ENCODE measurements at regions of chr6 and their contacts with region 1.

Region 1: GRCh38 chr6:13711733-13712598 is at the start of gene RANBP9:
- DNase-seq: peak; percentile 87 to 94
- ATAC-seq: peak; percentile 83 to 94 (median 85)
- H3K4me3 ChIP-seq: peak within 1 kb of the TSS; percentile 80
- H3K4me3 Mint-ChIP-seq: peak within 1 kb of the TSS; percentile 98
- H3K27ac ChIP-seq: peak within 1 kb of the TSS; percentile 91
- H3K27ac Mint-ChIP-seq: peak within 1 kb of the TSS; percentile 87 to 97
- H3K4me1 ChIP-seq: peaks cover 20% of the 10 kb centered on the region
- H3K4me1 Mint-ChIP-seq: peaks cover 46 to 47% of the 10 kb centered on the region in 2 donors
- H3K27me3 ChIP-seq: no peaks in the 10 kb centered on the region
- H3K27me3 Mint-ChIP-seq: no peaks in the 10 kb centered on the region
- CTCF ChIP-seq: no peak
- total RNA-seq, gene RANBP9: 52.2 to 62.5 (median 57.6) TPM

Region 2: GRCh38 chr6:13526727-13527670 is 185.0 kb before region 1 on chr6:
- intact Hi-C with region 1: no loop called
- DNase-seq: peak; percentile 27 to 62
- ATAC-seq: peak; percentile 86 to 91 (median 86)
- H3K4me3 ChIP-seq: no peak overlapping the region
- H3K4me3 Mint-ChIP-seq: peak overlapping the region; percentile 87
- H3K27ac ChIP-seq: peak overlapping the region; percentile 75
- H3K27ac Mint-ChIP-seq: peak overlapping the region; percentile 75 to 83
- H3K4me1 ChIP-seq: peaks cover 19% of the 10 kb centered on the region
- H3K4me1 Mint-ChIP-seq: peaks cover 17 to 24% of the 10 kb centered on the region in 2 donors
- H3K27me3 ChIP-seq: no peaks in the 10 kb centered on the region
- H3K27me3 Mint-ChIP-seq: no peaks in the 10 kb centered on the region
- CTCF ChIP-seq: no peak

Region 3: GRCh38 chr6:13614926-13615798 is 96.8 kb before region 1 on chr6 and contains the start of gene NOL7:
- intact Hi-C with region 1: loop called (anchors 2 kb)
- DNase-seq: peak; percentile 100
- ATAC-seq: peak; percentile 93 to 99 (median 94)
- H3K4me3 ChIP-seq: peak within 1 kb of the TSS; percentile 91
- H3K4me3 Mint-ChIP-seq: peak within 1 kb of the TSS; percentile 99
- H3K27ac ChIP-seq: peak within 1 kb of the TSS; percentile 76
- H3K27ac Mint-ChIP-seq: peak within 1 kb of the TSS; percentile 94 to 99
- H3K4me1 ChIP-seq: peaks cover 17% of the 10 kb centered on the region
- H3K4me1 Mint-ChIP-seq: peaks cover 35 to 37% of the 10 kb centered on the region in 2 donors
- H3K27me3 ChIP-seq: no peaks in the 10 kb centered on the region
- H3K27me3 Mint-ChIP-seq: no peaks in the 10 kb centered on the region
- CTCF ChIP-seq: peak; percentile 82
- total RNA-seq, gene NOL7: 24.7 to 31.3 (median 29.6) TPM

Region 4: DNA sequence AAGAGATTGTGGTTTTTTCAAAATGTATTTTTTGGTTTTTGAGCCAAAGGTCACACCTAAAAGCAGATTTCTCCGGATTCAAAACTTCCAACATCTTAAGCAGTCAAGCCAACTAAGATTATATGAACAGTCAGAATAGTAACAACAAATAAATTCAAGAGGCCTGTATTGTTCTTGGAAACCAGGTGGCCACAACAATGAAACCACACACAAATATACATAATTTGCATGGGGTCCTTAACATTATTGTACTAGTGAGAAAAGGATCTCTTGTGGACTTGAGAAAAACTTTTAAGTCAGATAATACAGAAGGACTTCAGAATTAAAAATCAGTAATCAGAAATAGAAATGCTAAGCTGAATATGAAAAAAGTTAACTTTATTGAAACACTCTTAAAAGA is 56.3 kb before region 1 on chr6:
- intact Hi-C with region 1: no loop called
- DNase-seq: no peak
- ATAC-seq: no peak
- H3K4me3 ChIP-seq: no peak overlapping the region
- H3K4me3 Mint-ChIP-seq: no peak overlapping the region
- H3K27ac ChIP-seq: no peak overlapping the region
- H3K27ac Mint-ChIP-seq: no peak overlapping the region
- H3K4me1 ChIP-seq: peaks cover 5% of the 10 kb centered on the region
- H3K4me1 Mint-ChIP-seq: peaks cover 26 to 27% of the 10 kb centered on the region in 2 donors
- H3K27me3 ChIP-seq: no peaks in the 10 kb centered on the region
- H3K27me3 Mint-ChIP-seq: no peaks in the 10 kb centered on the region
- CTCF ChIP-seq: no peak

Region 5: GRCh38 chr6:13668291-13668928 is 43.6 kb before region 1 on chr6:
- intact Hi-C with region 1: loop called (anchors 5 kb)
- DNase-seq: peak in 1 of 2 donors; percentile 38
- ATAC-seq: peak; percentile 66 to 74 (median 67)
- H3K4me3 ChIP-seq: no peak overlapping the region
- H3K4me3 Mint-ChIP-seq: peak overlapping the region; percentile 55
- H3K27ac ChIP-seq: no peak overlapping the region
- H3K27ac Mint-ChIP-seq: peak overlapping the region; percentile 71 to 76
- H3K4me1 ChIP-seq: peaks cover 13% of the 10 kb centered on the region
- H3K4me1 Mint-ChIP-seq: peaks cover 88% of the 10 kb centered on the region in 2 donors
- H3K27me3 ChIP-seq: no peaks in the 10 kb centered on the region
- H3K27me3 Mint-ChIP-seq: no peaks in the 10 kb centered on the region
- CTCF ChIP-seq: no peak

Region 6: GRCh38 chr6:13695252-13695651 is 16.7 kb before region 1 on chr6:
- intact Hi-C with region 1: loop called (anchors 2 kb)
- DNase-seq: peak in 1 of 2 donors; percentile 28
- ATAC-seq: peak in 2 of 3 donors; percentile 26 to 33
- H3K4me3 ChIP-seq: no peak overlapping the region
- H3K4me3 Mint-ChIP-seq: peak overlapping the region; percentile 61
- H3K27ac ChIP-seq: peak overlapping the region; percentile 34
- H3K27ac Mint-ChIP-seq: peak overlapping the region; percentile 83 to 88
- H3K4me1 ChIP-seq: peaks cover 3% of the 10 kb centered on the region
- H3K4me1 Mint-ChIP-seq: peaks cover 50 to 52% of the 10 kb centered on the region in 2 donors
- H3K27me3 ChIP-seq: no peaks in the 10 kb centered on the region
- H3K27me3 Mint-ChIP-seq: no peaks in the 10 kb centered on the region
- CTCF ChIP-seq: no peak

Region 7: DNA sequence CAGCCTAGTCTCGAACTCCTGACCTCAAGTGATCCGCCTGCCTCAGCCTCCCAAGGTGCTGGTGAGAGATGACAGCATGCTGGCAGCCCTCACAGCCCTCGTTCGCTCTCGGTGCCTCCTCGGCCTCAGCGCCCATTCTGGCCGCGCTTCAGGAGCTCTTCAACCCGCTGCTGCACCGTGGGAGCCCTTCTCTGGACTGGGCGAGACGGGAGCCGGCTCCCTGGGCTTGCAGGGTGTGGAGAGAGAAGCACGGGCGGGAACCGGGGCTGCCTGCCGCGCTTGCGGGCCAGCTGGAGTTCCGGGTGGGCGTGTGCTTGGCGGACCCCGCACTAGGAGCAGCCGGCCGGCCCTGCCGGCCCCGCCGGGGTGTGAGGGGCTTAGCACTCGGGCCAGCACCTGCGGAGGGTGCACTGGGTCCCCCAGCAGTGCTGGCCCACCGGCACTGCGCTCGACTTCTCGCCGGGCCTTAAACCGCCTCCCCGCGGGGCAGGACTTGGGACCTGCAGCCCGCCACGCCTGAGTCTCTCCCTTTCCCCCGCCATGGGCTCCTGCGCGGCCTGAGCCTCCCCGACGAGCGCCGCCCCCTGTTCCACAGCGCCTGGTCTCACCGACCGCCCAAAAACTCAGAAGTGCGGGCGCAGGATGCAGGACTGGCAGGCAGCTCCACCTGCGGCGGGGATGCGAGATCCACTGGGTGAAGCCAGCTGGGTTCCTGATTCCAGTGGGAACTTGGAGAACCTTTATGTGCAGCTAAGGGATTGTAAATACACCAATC is 31.2 kb after region 1 on chr6:
- intact Hi-C with region 1: no loop called
- DNase-seq: no peak
- ATAC-seq: no peak
- H3K4me3 ChIP-seq: no peak overlapping the region
- H3K4me3 Mint-ChIP-seq: peak overlapping the region; percentile 28
- H3K27ac ChIP-seq: no peak overlapping the region
- H3K27ac Mint-ChIP-seq: no peak overlapping the region
- H3K4me1 ChIP-seq: peaks cover 12% of the 10 kb centered on the region
- H3K4me1 Mint-ChIP-seq: peaks cover 7 to 20% of the 10 kb centered on the region in 2 donors
- H3K27me3 ChIP-seq: no peaks in the 10 kb centered on the region
- H3K27me3 Mint-ChIP-seq: peaks cover 0 to 3% of the 10 kb centered on the region in 2 donors
- CTCF ChIP-seq: no peak

Region 8: GRCh38 chr6:13924146-13924948 is 212.4 kb after region 1 on chr6:
- intact Hi-C with region 1: no loop called
- DNase-seq: peak in 1 of 2 donors; percentile 24
- ATAC-seq: peak; percentile 28 to 80 (median 47)
- H3K4me3 ChIP-seq: peak overlapping the region; percentile 22
- H3K4me3 Mint-ChIP-seq: peak overlapping the region; percentile 78
- H3K27ac ChIP-seq: no peak overlapping the region
- H3K27ac Mint-ChIP-seq: peak overlapping the region in 1 of 2 donors; percentile 72
- H3K4me1 ChIP-seq: peaks cover 16% of the 10 kb centered on the region
- H3K4me1 Mint-ChIP-seq: peaks cover 7 to 15% of the 10 kb centered on the region in 2 donors
- H3K27me3 ChIP-seq: peaks cover 49% of the 10 kb centered on the region
- H3K27me3 Mint-ChIP-seq: peaks cover 52 to 72% of the 10 kb centered on the region in 2 donors
- CTCF ChIP-seq: no peak